CD4-positive, alpha-beta T cell (primary cell): ENCODE measurements at regions of chr4 and their contacts with region 1.

Region 1: GRCh38 chr4:77773101-77773500 is 46.1 kb downstream of the CNOT6L start:
- DNase-seq: no peak
- ATAC-seq: no peak
- H3K4me3 ChIP-seq: no peak overlapping the region
- H3K4me3 Mint-ChIP-seq: no peak overlapping the region
- H3K27ac ChIP-seq: no peak overlapping the region
- H3K27ac Mint-ChIP-seq: no peak overlapping the region
- H3K4me1 ChIP-seq: peaks cover 3% of the 10 kb centered on the region
- H3K4me1 Mint-ChIP-seq: peaks cover 57% of the 10 kb centered on the region
- H3K27me3 ChIP-seq: no peaks in the 10 kb centered on the region
- H3K27me3 Mint-ChIP-seq: no peaks in the 10 kb centered on the region
- CTCF ChIP-seq: no peak

Region 2: GRCh38 chr4:77579406-77580076 is 193.6 kb before region 1 on chr4:
- CTCF ChIA-PET with region 1: no interaction called
- POLR2A ChIA-PET with region 1: no interaction called
- intact Hi-C with region 1: no loop called
- DNase-seq: no peak
- ATAC-seq: no peak
- H3K4me3 ChIP-seq: no peak overlapping the region
- H3K4me3 Mint-ChIP-seq: no peak overlapping the region
- H3K27ac ChIP-seq: no peak overlapping the region
- H3K27ac Mint-ChIP-seq: no peak overlapping the region
- H3K4me1 ChIP-seq: no peaks in the 10 kb centered on the region
- H3K4me1 Mint-ChIP-seq: no peaks in the 10 kb centered on the region
- H3K27me3 ChIP-seq: no peaks in the 10 kb centered on the region
- H3K27me3 Mint-ChIP-seq: peaks cover 10% of the 10 kb centered on the region
- CTCF ChIP-seq: no peak

Region 3: GRCh38 chr4:77734928-77735327 is 38.2 kb before region 1 on chr4:
- CTCF ChIA-PET with region 1: no interaction called
- POLR2A ChIA-PET with region 1: no interaction called
- intact Hi-C with region 1: loop called in 1 of 2 experiments (anchors 5 kb)
- DNase-seq: peak in 5 of 14 experiments; percentile 4 to 81 (median 62)
- ATAC-seq: peak; percentile 71
- H3K4me3 ChIP-seq: no peak overlapping the region
- H3K4me3 Mint-ChIP-seq: peak overlapping the region; percentile 61
- H3K27ac ChIP-seq: no peak overlapping the region
- H3K27ac Mint-ChIP-seq: peak overlapping the region; percentile 78
- H3K4me1 ChIP-seq: peaks cover 5% of the 10 kb centered on the region
- H3K4me1 Mint-ChIP-seq: peaks cover 82% of the 10 kb centered on the region
- H3K27me3 ChIP-seq: no peaks in the 10 kb centered on the region
- H3K27me3 Mint-ChIP-seq: no peaks in the 10 kb centered on the region
- CTCF ChIP-seq: no peak